Mammary epithelial cell (primary cell): ENCODE measurements at regions of chr9 and their contacts with region 1.

Region 1: DNA sequence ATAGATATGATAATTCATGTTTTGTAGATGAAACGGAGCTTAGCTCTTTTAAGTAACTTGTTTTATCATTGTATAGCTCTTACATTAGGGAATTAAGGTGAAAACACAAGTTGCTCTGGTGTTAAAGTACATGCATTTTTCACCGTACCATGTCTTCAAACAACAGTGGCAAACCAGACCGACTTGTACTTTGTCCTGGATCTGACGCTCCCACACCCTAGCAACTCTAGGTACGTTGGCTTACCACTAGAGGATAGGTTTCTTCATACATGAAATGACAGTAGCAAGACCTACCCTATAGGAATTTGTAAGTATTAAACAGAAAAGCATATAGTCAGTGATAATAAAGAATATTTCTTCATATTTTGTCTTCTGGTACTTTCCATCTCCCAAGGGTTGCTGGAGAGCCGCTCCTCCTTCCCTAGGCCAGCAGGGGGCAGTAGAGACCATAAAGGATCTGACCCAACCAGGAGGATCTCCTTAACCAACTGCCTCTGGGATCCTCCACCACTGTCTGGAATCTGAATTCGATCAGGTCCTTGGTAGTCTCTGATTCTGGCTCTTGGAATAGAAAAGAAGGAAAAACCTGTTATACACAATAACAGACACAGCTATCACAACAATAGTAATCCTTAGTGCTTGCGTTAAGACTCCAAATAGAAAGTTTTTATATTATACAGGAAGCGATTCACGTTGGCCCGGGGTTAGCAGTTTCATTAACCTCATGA is 136.7 kb downstream of the CAVIN4 start:
- DNase-seq: peak; percentile 37
- H3K4me3 ChIP-seq: no peak overlapping the region
- H3K27ac ChIP-seq: no peak overlapping the region
- H3K4me1 ChIP-seq: no peaks in the 10 kb centered on the region
- H3K27me3 ChIP-seq: no peaks in the 10 kb centered on the region
- CTCF ChIP-seq: peak; percentile 87 to 95

Region 2: DNA sequence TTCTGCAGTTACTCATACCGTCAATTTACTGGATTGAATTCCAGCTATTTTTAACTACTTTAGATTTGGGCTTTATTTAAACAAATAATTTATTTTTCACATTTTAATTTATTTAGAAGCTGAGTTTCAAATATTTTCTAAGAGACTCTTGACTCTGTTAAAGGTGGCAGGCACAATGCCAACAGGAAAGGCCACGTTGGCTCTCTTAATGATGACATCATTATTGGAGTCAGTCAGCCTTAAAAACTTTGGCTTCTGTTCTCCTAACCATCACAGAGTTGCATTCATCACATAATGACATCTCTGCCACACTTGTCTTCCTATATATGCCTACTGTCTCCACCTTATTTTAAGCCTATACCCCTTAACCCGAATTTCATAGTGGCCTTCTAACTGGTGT is 141.7 kb after region 1 on chr9:
- CTCF ChIA-PET with region 1: no interaction called
- dilution Hi-C with region 1: no loop called
- in situ Hi-C with region 1: no loop called
- intact Hi-C with region 1: no loop called
- DNase-seq: no peak
- H3K4me3 ChIP-seq: no peak overlapping the region
- H3K27ac ChIP-seq: no peak overlapping the region
- H3K4me1 ChIP-seq: no peaks in the 10 kb centered on the region
- H3K27me3 ChIP-seq: no peaks in the 10 kb centered on the region
- CTCF ChIP-seq: no peak

Region 3: DNA sequence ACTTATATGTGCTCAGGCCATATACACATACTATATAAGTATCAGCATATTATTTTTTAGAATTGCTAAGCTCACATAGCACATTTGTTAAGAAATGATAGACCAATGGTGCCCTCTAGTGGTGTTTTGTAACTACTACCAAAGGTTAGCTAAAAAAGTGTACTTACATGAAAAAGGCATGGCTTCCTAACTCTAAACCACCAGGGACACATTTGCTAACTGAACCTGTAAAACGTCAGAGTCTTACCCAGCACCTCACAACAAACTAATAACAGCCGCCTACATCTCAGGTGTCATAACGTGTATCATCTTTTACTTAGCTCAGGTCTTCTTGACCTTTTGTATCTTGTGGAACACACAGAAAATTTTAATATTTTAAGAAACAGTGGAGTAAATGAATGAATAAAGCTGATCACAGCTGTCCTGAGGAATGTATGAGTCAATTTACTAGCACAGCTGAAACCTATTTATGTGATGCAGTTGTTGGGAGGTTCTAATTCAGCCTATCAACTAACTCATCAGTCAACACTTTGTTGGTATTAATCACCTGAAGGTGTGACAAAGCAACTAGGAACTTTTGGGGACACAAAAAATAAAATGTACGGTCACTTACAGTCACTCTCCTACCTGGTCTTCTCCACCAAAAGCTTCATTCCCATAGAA is 597.4 kb after region 1 on chr9:
- CTCF ChIA-PET with region 1: no interaction called
- dilution Hi-C with region 1: no loop called
- in situ Hi-C with region 1: loop called (anchors 5 to 10 kb)
- intact Hi-C with region 1: loop called (anchors 1 kb)
- DNase-seq: peak; percentile 58
- H3K4me3 ChIP-seq: no peak overlapping the region
- H3K27ac ChIP-seq: no peak overlapping the region
- H3K4me1 ChIP-seq: peaks cover 15% of the 10 kb centered on the region
- H3K27me3 ChIP-seq: no peaks in the 10 kb centered on the region
- CTCF ChIP-seq: peak; percentile 48 to 59